Aorta (tissue), 5 donors: ENCODE measurements at regions of chr14 and their contacts with region 1.

Region 1: DNA sequence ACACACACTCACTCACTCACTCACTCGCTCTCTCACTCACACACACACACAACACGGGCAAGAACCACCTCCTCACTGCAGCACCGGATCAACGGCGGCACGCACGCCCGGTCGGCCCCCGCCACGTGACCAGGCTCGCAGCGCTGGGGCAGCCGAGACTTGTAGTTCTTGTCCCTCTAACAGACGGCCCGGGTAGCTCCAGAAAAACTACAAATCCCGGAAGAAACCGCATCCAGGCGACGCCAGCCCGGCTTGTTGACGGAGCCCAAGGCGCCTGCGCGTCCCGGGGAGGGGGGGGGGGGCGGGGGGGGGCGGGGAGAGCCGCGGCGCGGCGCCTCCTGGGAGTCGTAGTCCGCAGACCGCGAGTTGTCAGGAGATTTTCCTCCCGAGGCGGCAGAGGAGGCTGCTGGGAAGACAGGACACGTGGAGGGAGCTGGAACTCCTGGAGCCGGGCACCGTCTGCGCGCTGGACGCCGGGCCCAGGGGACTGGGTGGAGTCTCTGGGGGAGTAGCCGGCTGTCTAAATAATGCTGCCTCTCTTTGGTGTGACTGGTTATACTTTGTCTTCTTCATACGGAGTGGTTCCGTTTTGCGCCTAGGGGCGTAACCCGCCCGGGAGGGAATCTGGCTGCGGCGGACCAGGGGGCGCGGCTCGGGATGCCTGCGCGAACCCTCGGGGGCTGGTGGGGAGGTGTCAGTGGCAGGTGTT is at the start of gene MAX:
- DNase-seq: peak; percentile 99
- ATAC-seq: peak; percentile 98
- H3K4me3 ChIP-seq: peak within 1 kb of the TSS; percentile 77 to 88
- H3K27ac ChIP-seq: no peak within 1 kb of the TSS
- H3K4me1 ChIP-seq: no peaks in the 10 kb centered on the region
- H3K27me3 ChIP-seq: no peaks in the 10 kb centered on the region
- total RNA-seq, gene MAX: 65.6 to 98.0 TPM

Region 2: GRCh38 chr14:65156568-65157366 is 54.2 kb after region 1 on chr14:
- intact Hi-C with region 1: loop called (anchors 2 to 5 kb)
- DNase-seq: peak; percentile 64 to 78
- ATAC-seq: peak; percentile 81
- H3K4me3 ChIP-seq: no peak overlapping the region
- H3K27ac ChIP-seq: peak overlapping the region in 1 of 2 donors; percentile 92
- H3K4me1 ChIP-seq: no peaks in the 10 kb centered on the region
- H3K27me3 ChIP-seq: no peaks in the 10 kb centered on the region